ENCODE measurements at regions of chr10 and their contacts with region 1.

Region 1: DNA sequence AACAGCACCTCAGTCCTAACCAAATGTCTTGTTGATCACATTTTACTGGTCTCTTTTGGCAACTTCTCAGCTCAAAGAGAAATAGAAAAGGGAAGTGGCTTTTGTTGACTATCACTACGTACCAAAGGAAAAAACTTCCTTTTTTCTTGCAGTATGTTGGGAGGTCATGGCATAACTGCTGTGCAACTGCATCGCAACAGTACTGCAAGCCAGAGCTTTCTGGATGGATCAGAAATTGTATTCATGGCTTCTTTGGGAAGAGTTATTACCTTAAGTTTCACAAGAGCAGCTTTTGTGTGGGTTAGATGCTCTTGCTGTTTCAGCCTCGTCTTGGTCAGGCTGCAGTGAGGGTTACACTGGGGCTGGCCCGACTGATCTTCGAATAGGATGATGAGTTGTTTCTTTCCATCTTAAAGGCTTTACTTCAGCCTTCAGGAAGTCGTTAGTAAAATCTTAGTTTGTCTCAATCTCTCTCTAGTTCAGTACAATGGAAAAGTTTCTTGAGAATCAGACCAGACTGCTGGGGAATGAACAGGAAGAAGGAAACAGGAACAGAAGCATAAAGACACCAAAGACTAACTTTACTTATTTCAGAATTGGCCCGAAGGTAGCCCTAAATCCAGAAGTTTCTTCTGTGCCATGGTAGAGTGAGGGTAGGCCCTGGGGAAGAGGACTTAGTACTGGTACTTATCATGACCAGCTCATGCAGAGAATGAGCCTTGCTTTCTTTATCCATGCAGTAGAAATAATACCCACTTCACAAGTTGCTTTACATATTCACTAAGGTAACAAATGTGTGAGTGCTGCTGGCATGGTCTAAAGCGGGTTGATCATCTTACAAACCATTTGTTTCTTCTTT is 153.6 kb downstream of the CELF2 start:
- DNase-seq: peak; percentile 75
- ATAC-seq: peak; percentile 53
- H3K4me3 ChIP-seq: peak overlapping the region; percentile 31 to 99 (median 62)
- H3K4me3 Mint-ChIP-seq: no peak overlapping the region
- H3K27ac ChIP-seq: peak overlapping the region; percentile 83 to 87
- H3K27ac Mint-ChIP-seq: no peak overlapping the region
- H3K4me1 ChIP-seq: peaks cover 84 to 90% of the 10 kb centered on the region in 2 donors
- H3K4me1 Mint-ChIP-seq: peaks cover 45% of the 10 kb centered on the region
- H3K27me3 ChIP-seq: no peaks in the 10 kb centered on the region
- H3K27me3 Mint-ChIP-seq: no peaks in the 10 kb centered on the region
- CTCF ChIP-seq: no peak

Region 2: GRCh38 chr10:10911471-10911921 is 259.7 kb before region 1 on chr10:
- CTCF ChIA-PET with region 1: no interaction called
- POLR2A ChIA-PET with region 1: no interaction called
- intact Hi-C with region 1: no loop called
- DNase-seq: no peak
- ATAC-seq: no peak
- H3K4me3 ChIP-seq: no peak overlapping the region
- H3K4me3 Mint-ChIP-seq: no peak overlapping the region
- H3K27ac ChIP-seq: no peak overlapping the region
- H3K27ac Mint-ChIP-seq: no peak overlapping the region
- H3K4me1 ChIP-seq: no peaks in the 10 kb centered on the region
- H3K4me1 Mint-ChIP-seq: no peaks in the 10 kb centered on the region
- H3K27me3 ChIP-seq: no peaks in the 10 kb centered on the region
- H3K27me3 Mint-ChIP-seq: peaks cover 15% of the 10 kb centered on the region
- CTCF ChIP-seq: no peak

Region 3: GRCh38 chr10:10930979-10931743 is 240.1 kb before region 1 on chr10:
- CTCF ChIA-PET with region 1: no interaction called
- POLR2A ChIA-PET with region 1: no interaction called
- intact Hi-C with region 1: no loop called
- DNase-seq: no peak
- ATAC-seq: no peak
- H3K4me3 ChIP-seq: no peak overlapping the region
- H3K4me3 Mint-ChIP-seq: no peak overlapping the region
- H3K27ac ChIP-seq: no peak overlapping the region
- H3K27ac Mint-ChIP-seq: no peak overlapping the region
- H3K4me1 ChIP-seq: no peaks in the 10 kb centered on the region
- H3K4me1 Mint-ChIP-seq: no peaks in the 10 kb centered on the region
- H3K27me3 ChIP-seq: no peaks in the 10 kb centered on the region
- H3K27me3 Mint-ChIP-seq: peaks cover 18% of the 10 kb centered on the region
- CTCF ChIP-seq: no peak

Region 4: GRCh38 chr10:11236234-11236633 is 65.0 kb after region 1 on chr10:
- CTCF ChIA-PET with region 1: interaction called, 4 read pairs
- POLR2A ChIA-PET with region 1: interaction called, 37 read pairs
- intact Hi-C with region 1: no loop called
- DNase-seq: no peak
- ATAC-seq: no peak
- H3K4me3 ChIP-seq: no peak overlapping the region
- H3K4me3 Mint-ChIP-seq: no peak overlapping the region
- H3K27ac ChIP-seq: peak overlapping the region in 1 of 2 donors; percentile 64
- H3K27ac Mint-ChIP-seq: peak overlapping the region; percentile 54
- H3K4me1 ChIP-seq: peaks cover 46 to 52% of the 10 kb centered on the region in 2 donors
- H3K4me1 Mint-ChIP-seq: peaks cover 74% of the 10 kb centered on the region
- H3K27me3 ChIP-seq: no peaks in the 10 kb centered on the region
- H3K27me3 Mint-ChIP-seq: no peaks in the 10 kb centered on the region
- CTCF ChIP-seq: no peak

Region 5: GRCh38 chr10:11286261-11286852 is 115.1 kb after region 1 on chr10:
- CTCF ChIA-PET with region 1: no interaction called
- POLR2A ChIA-PET with region 1: no interaction called
- intact Hi-C with region 1: no loop called
- DNase-seq: no peak
- ATAC-seq: no peak
- H3K4me3 ChIP-seq: no peak overlapping the region
- H3K4me3 Mint-ChIP-seq: no peak overlapping the region
- H3K27ac ChIP-seq: peak overlapping the region in 1 of 2 donors; percentile 1
- H3K27ac Mint-ChIP-seq: peak overlapping the region; percentile 75
- H3K4me1 ChIP-seq: no peaks in the 10 kb centered on the region
- H3K4me1 Mint-ChIP-seq: peaks cover 2% of the 10 kb centered on the region
- H3K27me3 ChIP-seq: no peaks in the 10 kb centered on the region
- H3K27me3 Mint-ChIP-seq: no peaks in the 10 kb centered on the region
- CTCF ChIP-seq: no peak

Measured in B cell (primary cell).